GM10248 (cell line): ENCODE measurements at regions of chr7 and their contacts with region 1.

Region 1: DNA sequence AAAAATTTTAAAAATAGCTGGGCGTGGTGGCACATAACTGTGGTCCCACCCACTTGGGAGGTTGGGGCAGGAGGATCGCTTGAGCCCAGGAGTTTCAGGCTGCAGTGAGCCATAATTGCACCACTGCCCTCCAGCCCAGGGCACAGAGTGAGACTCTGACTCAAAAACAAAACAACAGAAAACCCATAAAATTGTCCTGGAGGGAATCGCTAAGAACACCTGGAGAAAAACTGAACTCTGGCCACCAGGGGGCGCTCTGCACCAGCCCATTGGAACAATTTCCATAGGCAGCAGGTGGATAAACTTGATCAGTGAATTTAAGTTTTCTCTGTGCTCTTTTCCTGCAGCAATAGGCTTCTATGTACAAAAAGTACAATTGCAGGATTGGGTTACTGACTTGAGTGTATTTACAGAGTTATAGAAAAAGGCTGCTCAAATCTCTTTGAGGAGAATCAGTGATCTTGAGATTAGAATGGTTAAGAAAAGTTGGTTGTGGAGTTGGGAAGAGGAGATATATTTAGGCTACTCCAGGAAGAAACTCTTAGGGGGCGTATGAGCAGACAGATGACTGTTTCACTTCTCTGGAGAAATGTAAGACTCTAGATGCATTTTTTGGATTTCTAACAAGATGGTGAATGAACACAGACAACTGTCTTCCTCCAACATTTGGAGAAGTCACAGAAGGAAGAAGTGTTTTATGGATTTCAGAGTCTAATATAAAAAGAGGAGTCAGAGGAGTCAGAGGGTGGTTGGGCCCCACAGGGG is 274.9 kb upstream of the GALNT17 start:
- DNase-seq: peak; percentile 50
- CTCF ChIP-seq: peak; percentile 84

Region 2: GRCh38 chr7:70870349-70870748 is 13.3 kb after region 1 on chr7:
- CTCF ChIA-PET with region 1: interaction called, 10 read pairs
- POLR2A ChIA-PET with region 1: no interaction called
- DNase-seq: no peak
- CTCF ChIP-seq: no peak

Region 3: GRCh38 chr7:71733107-71733870 is 876.2 kb after region 1 on chr7:
- CTCF ChIA-PET with region 1: interaction called, 104 read pairs
- POLR2A ChIA-PET with region 1: no interaction called
- DNase-seq: peak; percentile 66
- CTCF ChIP-seq: peak; percentile 91